Brain microvascular endothelial cell (primary cell): ENCODE measurements at regions of chr5 and their contacts with region 1.

Region 1: DNA sequence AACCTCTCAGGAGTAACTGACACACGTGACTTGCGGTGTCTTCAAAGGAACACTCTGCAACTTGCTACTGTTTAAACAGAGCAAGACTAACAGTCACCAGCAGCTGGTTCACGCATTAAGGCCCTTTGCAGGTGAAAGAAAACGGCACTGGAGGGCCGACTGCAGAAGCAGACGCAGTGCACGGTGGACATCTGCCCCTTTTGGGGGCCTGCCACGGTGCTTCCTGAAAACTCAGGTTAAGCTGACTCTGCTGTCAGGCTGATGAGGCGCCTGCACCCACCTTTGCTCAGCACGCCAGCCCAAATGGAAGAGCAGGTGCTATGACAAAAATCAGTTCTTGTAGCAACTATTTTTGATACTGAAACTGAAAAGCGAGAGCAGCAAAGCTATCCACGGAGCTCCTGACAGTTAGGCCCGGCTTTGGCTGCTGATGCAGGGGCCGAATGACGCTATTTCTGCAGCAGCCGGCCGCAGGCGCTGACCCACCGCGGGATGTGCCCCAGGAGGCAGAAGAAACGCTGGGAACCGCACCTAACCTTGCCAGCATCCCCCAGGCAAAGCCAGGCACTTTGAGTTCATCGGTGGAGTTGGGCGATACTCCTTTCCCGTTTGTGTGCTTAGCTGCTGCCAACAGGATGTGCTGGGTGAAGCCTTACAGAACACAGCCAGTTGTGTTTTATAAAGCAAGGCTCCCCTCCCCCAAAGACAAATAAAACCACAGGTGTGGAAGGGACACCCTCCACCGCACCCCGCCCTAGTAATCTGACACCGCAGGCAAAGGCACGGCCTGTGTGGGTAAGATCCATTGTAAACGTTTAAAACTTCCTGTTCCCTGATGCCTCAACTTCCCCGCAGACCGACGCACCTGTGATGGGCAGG is 21.1 kb upstream of the TERT start:
- DNase-seq: no peak
- H3K4me3 ChIP-seq: no peak overlapping the region
- H3K27ac ChIP-seq: no peak overlapping the region
- H3K27me3 ChIP-seq: no peaks in the 10 kb centered on the region
- CTCF ChIP-seq: no peak

Region 2: GRCh38 chr5:969408-969839 is 346.5 kb before region 1 on chr5:
- in situ Hi-C with region 1: no loop called
- DNase-seq: no peak
- H3K4me3 ChIP-seq: no peak overlapping the region
- H3K27ac ChIP-seq: no peak overlapping the region
- H3K27me3 ChIP-seq: peaks cover 37% of the 10 kb centered on the region
- CTCF ChIP-seq: no peak

Region 3: DNA sequence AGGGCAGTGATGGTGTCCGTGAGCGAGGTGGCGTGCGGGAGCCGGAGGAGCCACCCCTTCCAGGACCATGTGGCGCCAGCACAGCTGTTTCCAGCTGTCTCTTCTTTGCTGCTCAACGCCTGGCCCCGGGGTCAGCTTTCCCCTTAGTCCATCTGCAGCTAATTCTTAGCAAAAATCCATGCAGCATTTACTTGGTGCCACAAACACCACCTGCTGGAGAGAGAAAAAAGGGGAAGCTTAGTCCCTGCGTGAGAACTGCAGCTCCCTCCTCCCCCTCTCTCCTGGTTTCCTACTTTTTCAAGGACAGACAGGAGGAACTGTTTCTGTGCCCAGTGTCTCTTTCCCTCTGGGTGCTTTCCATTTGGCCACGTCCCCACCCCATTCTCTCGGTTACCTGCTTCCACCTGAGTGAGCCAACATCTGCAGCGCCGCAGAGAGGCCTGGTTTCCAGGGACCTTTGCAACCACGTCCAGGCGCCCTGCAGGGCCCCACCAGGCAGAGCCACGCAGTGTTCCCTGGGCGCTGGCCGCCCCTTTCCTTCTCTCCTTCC is 111.2 kb before region 1 on chr5:
- in situ Hi-C with region 1: loop called (anchors 25 kb)
- DNase-seq: peak; percentile 12
- H3K4me3 ChIP-seq: no peak overlapping the region
- H3K27ac ChIP-seq: no peak overlapping the region
- H3K27me3 ChIP-seq: peaks cover 30% of the 10 kb centered on the region
- CTCF ChIP-seq: peak; percentile 50